CD4-positive, alpha-beta memory T cell (primary cell): ENCODE measurements at regions of chr15 and their contacts with region 1.

Region 1: GRCh38 chr15:73677146-73677607 is 7.0 kb upstream of the CD276 start:
- DNase-seq: peak; percentile 39 to 60 (median 48)
- H3K4me3 ChIP-seq: no peak overlapping the region
- H3K4me3 Mint-ChIP-seq: no peak overlapping the region
- H3K27ac ChIP-seq: no peak overlapping the region
- H3K27ac Mint-ChIP-seq: no peak overlapping the region
- H3K4me1 ChIP-seq: no peaks in the 10 kb centered on the region
- H3K4me1 Mint-ChIP-seq: peaks cover 0 to 5% (median 0%) of the 10 kb centered on the region in 4 donors
- H3K27me3 ChIP-seq: peaks cover 2% of the 10 kb centered on the region
- H3K27me3 Mint-ChIP-seq: peaks cover 17 to 24% of the 10 kb centered on the region in 2 donors

Region 2: DNA sequence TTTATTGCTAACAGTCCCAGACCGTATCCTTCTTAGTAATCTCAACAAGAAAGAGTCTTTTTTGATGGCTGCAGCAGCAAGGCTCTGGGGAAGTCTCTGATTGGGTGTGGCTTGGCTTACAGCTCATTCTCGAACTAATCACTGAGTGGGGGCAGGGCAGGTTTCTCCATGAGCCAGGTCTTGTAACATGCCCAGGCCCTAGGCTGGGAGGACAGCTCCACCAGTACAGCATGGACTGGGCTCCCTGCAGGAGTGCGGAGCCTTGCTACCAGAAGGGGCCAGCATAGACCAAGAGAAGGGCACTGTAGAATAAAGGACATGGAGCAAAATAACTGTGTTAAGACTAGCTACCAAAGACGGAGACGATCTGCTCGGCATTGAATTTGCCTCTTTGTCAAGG is 14.2 kb after region 1 on chr15:
- CTCF ChIA-PET with region 1: interaction called, 367 read pairs
- POLR2A ChIA-PET with region 1: no interaction called
- intact Hi-C with region 1: no loop called
- DNase-seq: no peak
- H3K4me3 ChIP-seq: no peak overlapping the region
- H3K4me3 Mint-ChIP-seq: no peak overlapping the region
- H3K27ac ChIP-seq: no peak overlapping the region
- H3K27ac Mint-ChIP-seq: no peak overlapping the region
- H3K4me1 ChIP-seq: peaks cover 9% of the 10 kb centered on the region
- H3K4me1 Mint-ChIP-seq: peaks cover 3 to 10% (median 4%) of the 10 kb centered on the region in 4 donors
- H3K27me3 ChIP-seq: peaks cover 16% of the 10 kb centered on the region
- H3K27me3 Mint-ChIP-seq: peaks cover 18 to 40% of the 10 kb centered on the region in 2 donors

Region 3: GRCh38 chr15:73697033-73697467 is 19.9 kb after region 1 on chr15:
- CTCF ChIA-PET with region 1: interaction called, 367 read pairs
- POLR2A ChIA-PET with region 1: interaction called, 9 read pairs
- intact Hi-C with region 1: loop called (anchors 1 kb)
- DNase-seq: peak; percentile 74 to 91 (median 78)
- H3K4me3 ChIP-seq: no peak overlapping the region
- H3K4me3 Mint-ChIP-seq: peak overlapping the region; percentile 18 to 77 (median 49)
- H3K27ac ChIP-seq: no peak overlapping the region
- H3K27ac Mint-ChIP-seq: peak overlapping the region in 6 of 7 donors; percentile 13 to 93 (median 58)
- H3K4me1 ChIP-seq: peaks cover 24% of the 10 kb centered on the region
- H3K4me1 Mint-ChIP-seq: peaks cover 20 to 35% (median 21%) of the 10 kb centered on the region in 4 donors
- H3K27me3 ChIP-seq: no peaks in the 10 kb centered on the region
- H3K27me3 Mint-ChIP-seq: peaks cover 22 to 43% of the 10 kb centered on the region in 2 donors

Region 4: GRCh38 chr15:73704869-73705645 is 27.9 kb after region 1 on chr15:
- CTCF ChIA-PET with region 1: interaction called, 367 read pairs
- POLR2A ChIA-PET with region 1: interaction called, 9 read pairs
- intact Hi-C with region 1: loop called (anchors 1 kb)
- DNase-seq: peak; percentile 48 to 60 (median 51)
- H3K4me3 ChIP-seq: no peak overlapping the region
- H3K4me3 Mint-ChIP-seq: no peak overlapping the region
- H3K27ac ChIP-seq: no peak overlapping the region
- H3K27ac Mint-ChIP-seq: no peak overlapping the region
- H3K4me1 ChIP-seq: no peaks in the 10 kb centered on the region
- H3K4me1 Mint-ChIP-seq: peaks cover 0 to 4% (median 3%) of the 10 kb centered on the region in 4 donors
- H3K27me3 ChIP-seq: no peaks in the 10 kb centered on the region
- H3K27me3 Mint-ChIP-seq: peaks cover 3 to 15% of the 10 kb centered on the region in 2 donors

Region 5: GRCh38 chr15:74275957-74276356 is 598.8 kb after region 1 on chr15:
- CTCF ChIA-PET with region 1: no interaction called
- POLR2A ChIA-PET with region 1: no interaction called
- intact Hi-C with region 1: no loop called
- DNase-seq: no peak
- H3K4me3 ChIP-seq: no peak overlapping the region
- H3K4me3 Mint-ChIP-seq: no peak overlapping the region
- H3K27ac ChIP-seq: no peak overlapping the region
- H3K27ac Mint-ChIP-seq: no peak overlapping the region
- H3K4me1 ChIP-seq: no peaks in the 10 kb centered on the region
- H3K4me1 Mint-ChIP-seq: no peaks in the 10 kb centered on the region
- H3K27me3 ChIP-seq: peaks cover under 1% of the 10 kb centered on the region
- H3K27me3 Mint-ChIP-seq: peaks cover 18 to 33% of the 10 kb centered on the region in 2 donors